Lower leg skin (tissue), 4 donors: ENCODE measurements at regions of chr2 and their contacts with region 1.

Region 1: DNA sequence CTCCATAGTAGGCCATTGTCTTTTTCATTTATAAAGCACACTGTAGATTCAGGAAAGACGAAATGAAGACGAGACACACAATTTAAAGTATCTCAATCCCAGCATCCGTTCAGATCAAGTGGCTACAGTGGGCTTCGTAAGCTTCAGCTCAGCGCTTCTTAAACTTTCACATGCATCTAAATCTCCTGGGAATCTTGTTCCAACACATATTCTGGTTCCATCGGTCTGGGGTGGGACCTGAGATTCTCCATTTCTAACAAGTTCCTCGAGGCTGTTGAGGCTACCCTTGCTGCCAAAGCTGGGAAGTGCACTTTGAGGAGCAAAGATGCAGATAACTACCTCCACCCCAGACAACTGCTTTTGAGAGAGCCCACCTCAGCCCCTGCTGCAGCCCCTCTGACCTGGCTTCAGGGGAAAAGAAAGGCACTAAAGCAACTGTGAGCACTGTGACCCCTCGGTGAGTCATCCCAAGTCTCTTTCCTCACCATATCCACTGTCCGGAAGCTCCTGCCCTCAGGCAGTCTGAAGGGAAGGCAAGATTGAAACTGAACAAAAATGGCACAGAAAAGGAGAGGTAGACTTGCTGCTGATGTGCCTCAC is 201.1 kb upstream of the FBXO11 start:
- DNase-seq: no peak
- H3K4me3 ChIP-seq: no peak overlapping the region
- CTCF ChIP-seq: no peak
- POLR2A ChIP-seq: no peak

Region 2: GRCh38 chr2:47867205-47867604 is 240.2 kb before region 1 on chr2:
- intact Hi-C with region 1: loop called (anchors 5 kb)
- DNase-seq: peak in 1 of 2 donors; percentile 32
- H3K4me3 ChIP-seq: no peak overlapping the region
- CTCF ChIP-seq: no peak
- POLR2A ChIP-seq: no peak